ENCODE measurements at regions of chr20 and their contacts with region 1.

Region 1: DNA sequence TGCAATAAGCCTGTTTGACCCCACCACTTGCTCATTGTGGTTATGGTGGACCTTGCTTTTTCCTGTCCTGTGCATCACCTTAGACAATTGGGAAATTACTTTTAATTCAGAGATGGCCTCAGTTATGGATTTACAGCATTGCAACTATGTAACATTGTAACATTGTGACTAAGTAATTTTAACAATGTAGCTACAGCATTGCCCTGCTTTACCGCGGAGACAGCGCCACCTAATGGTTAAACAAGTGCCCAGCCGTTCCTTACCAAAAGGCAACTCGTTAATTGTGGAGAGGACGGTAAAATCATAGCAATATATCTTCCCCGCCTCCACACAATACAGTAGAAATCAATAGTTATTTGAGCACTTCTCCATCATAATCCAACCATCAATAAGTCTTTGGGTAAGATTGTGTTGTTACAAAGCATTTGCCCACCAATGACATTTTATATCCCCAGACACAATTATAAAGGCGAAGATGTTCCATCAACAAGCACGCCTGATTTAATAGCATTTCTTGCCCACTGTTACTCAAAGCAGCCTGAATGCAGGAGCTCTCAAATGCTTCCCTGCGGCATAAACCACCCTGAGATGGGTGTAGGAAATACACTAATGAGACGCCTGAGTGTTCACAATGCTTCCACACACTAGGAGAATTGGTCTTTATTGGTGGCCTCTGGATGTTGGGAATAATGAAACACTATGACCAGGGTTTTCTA is 93.7 kb downstream of the PROKR2 start:
- DNase-seq: peak; percentile 35
- H3K4me3 Mint-ChIP-seq: no peak overlapping the region
- H3K27ac Mint-ChIP-seq: no peak overlapping the region
- H3K4me1 Mint-ChIP-seq: no peaks in the 10 kb centered on the region
- H3K27me3 Mint-ChIP-seq: peaks cover 30% of the 10 kb centered on the region
- CTCF ChIP-seq: peak; percentile 60

Region 2: GRCh38 chr20:5033571-5033970 is 189.5 kb before region 1 on chr20:
- CTCF ChIA-PET with region 1: no interaction called
- intact Hi-C with region 1: no loop called
- DNase-seq: no peak
- H3K4me3 Mint-ChIP-seq: no peak overlapping the region
- H3K27ac Mint-ChIP-seq: no peak overlapping the region
- H3K4me1 Mint-ChIP-seq: no peaks in the 10 kb centered on the region
- H3K27me3 Mint-ChIP-seq: no peaks in the 10 kb centered on the region
- CTCF ChIP-seq: no peak

Region 3: GRCh38 chr20:5448449-5449118 is 225.5 kb after region 1 on chr20:
- CTCF ChIA-PET with region 1: interaction called, 4 read pairs
- intact Hi-C with region 1: loop called (anchors 5 kb)
- DNase-seq: peak; percentile 60
- H3K4me3 Mint-ChIP-seq: no peak overlapping the region
- H3K27ac Mint-ChIP-seq: no peak overlapping the region
- H3K4me1 Mint-ChIP-seq: no peaks in the 10 kb centered on the region
- H3K27me3 Mint-ChIP-seq: peaks cover 44% of the 10 kb centered on the region
- CTCF ChIP-seq: no peak

Measured in Calu3 (cell line).